ENCODE measurements at regions of chr7 and their contacts with region 1.

Region 1: DNA sequence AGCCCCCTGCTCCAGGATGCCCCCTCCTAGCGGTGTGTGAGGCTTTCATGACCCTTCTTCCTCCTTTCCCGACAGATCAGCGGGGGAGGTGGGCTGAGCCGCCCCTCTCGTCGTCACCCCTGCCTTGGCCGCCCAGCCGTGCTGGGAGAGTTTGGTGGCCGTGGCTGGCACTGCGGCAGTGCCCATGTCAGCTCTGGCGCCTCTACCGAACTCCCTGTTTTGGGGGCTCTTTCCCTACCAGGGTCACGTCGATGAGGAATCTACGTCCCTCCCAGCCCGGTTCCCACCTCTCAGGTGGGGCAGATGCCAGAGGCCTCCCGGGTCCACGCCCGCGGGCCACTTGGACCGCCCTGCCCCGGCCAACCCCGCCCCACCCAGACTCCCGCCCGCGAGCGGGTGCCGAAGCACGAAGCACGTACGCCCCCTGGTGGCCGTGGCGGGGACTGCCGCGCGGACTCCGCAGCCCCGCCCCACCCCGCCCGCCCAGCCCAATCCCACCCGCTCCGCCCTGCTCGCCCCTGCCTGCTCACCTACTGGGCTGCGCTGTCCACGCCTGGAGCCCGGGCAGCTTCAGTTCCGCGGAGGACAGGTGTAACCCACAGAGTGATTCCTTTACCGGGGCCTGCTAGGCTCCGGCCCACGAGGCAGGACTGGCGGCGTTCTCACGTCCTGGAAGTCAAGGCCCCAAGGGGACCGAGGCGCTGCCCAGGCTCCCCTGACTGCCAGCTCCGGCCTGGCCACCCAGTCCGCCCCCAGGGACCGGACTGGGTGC is 127.1 kb downstream of the UBE2H start:
- DNase-seq: peak; percentile 95
- ATAC-seq: peak; percentile 75
- H3K4me3 Mint-ChIP-seq: peak overlapping the region; percentile 86
- H3K27ac Mint-ChIP-seq: peak overlapping the region; percentile 55
- H3K4me1 Mint-ChIP-seq: peaks cover 17% of the 10 kb centered on the region
- H3K27me3 Mint-ChIP-seq: no peaks in the 10 kb centered on the region

Region 2: DNA sequence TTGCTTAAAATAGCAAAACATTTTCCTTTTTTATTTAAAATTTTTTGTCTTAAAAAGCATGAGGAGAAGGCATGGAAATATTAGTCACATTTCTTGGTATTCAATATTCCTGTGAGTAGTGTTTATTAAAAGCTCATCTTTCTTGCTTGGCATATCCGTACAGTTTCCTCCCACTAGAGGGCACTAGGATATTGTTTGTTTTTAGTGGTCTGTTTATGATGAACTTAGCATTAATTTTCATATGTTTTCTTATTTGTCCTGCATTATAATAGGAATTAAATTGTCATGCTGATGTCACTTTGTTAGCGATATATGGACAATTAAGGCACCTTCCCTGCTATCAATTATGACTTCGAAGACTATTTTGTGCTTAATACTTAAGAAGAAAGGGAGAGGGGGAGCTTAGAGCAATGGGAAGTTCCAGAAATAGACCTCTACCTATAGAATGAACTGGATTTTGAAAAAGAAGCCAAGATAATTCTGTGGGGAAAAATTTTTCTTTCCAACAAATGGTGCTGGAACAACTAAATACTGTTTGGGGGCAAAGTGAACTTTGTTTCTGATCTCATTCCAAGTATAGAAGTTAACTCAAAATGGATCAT is 482.5 kb before region 1 on chr7:
- CTCF ChIA-PET with region 1: interaction called, 5 read pairs
- POLR2A ChIA-PET with region 1: no interaction called
- intact Hi-C with region 1: loop called in 1 of 2 experiments (anchors 1 kb)
- DNase-seq: peak; percentile 9
- ATAC-seq: peak; percentile 36
- H3K4me3 Mint-ChIP-seq: no peak overlapping the region
- H3K27ac Mint-ChIP-seq: no peak overlapping the region
- H3K4me1 Mint-ChIP-seq: peaks cover 29% of the 10 kb centered on the region
- H3K27me3 Mint-ChIP-seq: no peaks in the 10 kb centered on the region

Region 3: DNA sequence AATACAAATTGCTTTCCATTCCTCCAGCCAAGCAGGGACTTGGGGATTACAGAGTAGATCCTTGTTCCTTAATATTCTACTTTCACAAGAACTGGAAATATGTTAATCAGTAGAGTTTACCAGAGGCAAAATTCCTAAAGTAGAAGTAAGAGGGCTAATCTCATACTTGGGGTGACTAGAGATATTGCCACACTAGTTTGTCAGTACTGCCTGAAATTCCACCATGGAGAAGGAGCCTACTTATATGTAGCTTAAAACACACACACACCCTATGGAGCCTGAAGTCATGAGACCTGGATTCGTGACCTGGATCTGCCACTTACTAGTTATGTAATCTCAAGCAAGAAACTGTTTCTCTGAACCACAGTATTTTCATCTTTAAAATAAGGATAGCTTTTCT is 357.6 kb before region 1 on chr7:
- CTCF ChIA-PET with region 1: interaction called, 3 read pairs
- POLR2A ChIA-PET with region 1: no interaction called
- intact Hi-C with region 1: loop called in 1 of 2 experiments (anchors 1 kb)
- DNase-seq: no peak
- ATAC-seq: no peak
- H3K4me3 Mint-ChIP-seq: no peak overlapping the region
- H3K27ac Mint-ChIP-seq: no peak overlapping the region
- H3K4me1 Mint-ChIP-seq: peaks cover 16% of the 10 kb centered on the region
- H3K27me3 Mint-ChIP-seq: no peaks in the 10 kb centered on the region

Region 4: DNA sequence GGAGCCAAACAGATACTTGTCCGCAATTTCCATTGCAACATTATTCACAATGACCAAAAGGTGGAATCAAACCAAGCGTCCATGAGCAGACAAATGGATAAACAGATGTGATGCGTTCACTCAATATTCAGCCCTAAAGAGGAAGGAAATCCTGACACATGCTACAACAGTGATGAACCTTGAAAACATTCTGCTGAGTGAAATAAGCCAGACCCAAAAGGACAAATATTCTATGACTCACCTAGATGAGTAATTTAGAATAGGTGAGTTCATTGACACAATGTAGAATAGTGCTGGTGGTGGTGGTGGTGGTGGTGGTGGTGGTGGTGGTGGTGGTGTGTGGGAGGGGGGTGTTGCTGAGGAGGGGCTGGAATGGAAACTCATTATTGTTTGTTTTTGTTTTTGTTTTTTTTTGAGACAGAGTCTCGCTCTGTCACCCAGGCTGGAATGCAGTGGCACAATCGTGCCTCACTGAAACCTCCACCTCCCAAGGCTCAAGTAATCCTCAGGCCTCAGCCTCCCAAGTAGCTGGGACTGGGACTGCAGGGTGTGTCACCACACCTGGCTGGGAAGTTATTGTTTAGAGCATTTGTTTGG is 294.8 kb before region 1 on chr7:
- CTCF ChIA-PET with region 1: no interaction called
- POLR2A ChIA-PET with region 1: no interaction called
- intact Hi-C with region 1: loop called in 1 of 2 experiments (anchors 1 kb)
- DNase-seq: peak; percentile 70
- ATAC-seq: peak; percentile 96
- H3K4me3 Mint-ChIP-seq: no peak overlapping the region
- H3K27ac Mint-ChIP-seq: peak overlapping the region; percentile 13
- H3K4me1 Mint-ChIP-seq: peaks cover 11% of the 10 kb centered on the region
- H3K27me3 Mint-ChIP-seq: peaks cover 10% of the 10 kb centered on the region

Region 5: GRCh38 chr7:129664029-129665012 is 161.4 kb before region 1 on chr7:
- CTCF ChIA-PET with region 1: interaction called, 12 read pairs
- POLR2A ChIA-PET with region 1: no interaction called
- intact Hi-C with region 1: loop called (anchors 1 to 2 kb)
- DNase-seq: no peak
- ATAC-seq: no peak
- H3K4me3 Mint-ChIP-seq: no peak overlapping the region
- H3K27ac Mint-ChIP-seq: peak overlapping the region; percentile 25
- H3K4me1 Mint-ChIP-seq: peaks cover 10% of the 10 kb centered on the region
- H3K27me3 Mint-ChIP-seq: no peaks in the 10 kb centered on the region

Region 6: GRCh38 chr7:129755555-129755954 is 70.1 kb before region 1 on chr7:
- CTCF ChIA-PET with region 1: no interaction called
- POLR2A ChIA-PET with region 1: no interaction called
- intact Hi-C with region 1: no loop called
- DNase-seq: no peak
- ATAC-seq: no peak
- H3K4me3 Mint-ChIP-seq: no peak overlapping the region
- H3K27ac Mint-ChIP-seq: no peak overlapping the region
- H3K4me1 Mint-ChIP-seq: no peaks in the 10 kb centered on the region
- H3K27me3 Mint-ChIP-seq: no peaks in the 10 kb centered on the region

Region 7: GRCh38 chr7:129804890-129805719 is 20.6 kb before region 1 on chr7:
- CTCF ChIA-PET with region 1: interaction called, 15 read pairs
- POLR2A ChIA-PET with region 1: no interaction called
- intact Hi-C with region 1: no loop called
- DNase-seq: no peak
- ATAC-seq: no peak
- H3K4me3 Mint-ChIP-seq: no peak overlapping the region
- H3K27ac Mint-ChIP-seq: no peak overlapping the region
- H3K4me1 Mint-ChIP-seq: no peaks in the 10 kb centered on the region
- H3K27me3 Mint-ChIP-seq: no peaks in the 10 kb centered on the region

Region 8: DNA sequence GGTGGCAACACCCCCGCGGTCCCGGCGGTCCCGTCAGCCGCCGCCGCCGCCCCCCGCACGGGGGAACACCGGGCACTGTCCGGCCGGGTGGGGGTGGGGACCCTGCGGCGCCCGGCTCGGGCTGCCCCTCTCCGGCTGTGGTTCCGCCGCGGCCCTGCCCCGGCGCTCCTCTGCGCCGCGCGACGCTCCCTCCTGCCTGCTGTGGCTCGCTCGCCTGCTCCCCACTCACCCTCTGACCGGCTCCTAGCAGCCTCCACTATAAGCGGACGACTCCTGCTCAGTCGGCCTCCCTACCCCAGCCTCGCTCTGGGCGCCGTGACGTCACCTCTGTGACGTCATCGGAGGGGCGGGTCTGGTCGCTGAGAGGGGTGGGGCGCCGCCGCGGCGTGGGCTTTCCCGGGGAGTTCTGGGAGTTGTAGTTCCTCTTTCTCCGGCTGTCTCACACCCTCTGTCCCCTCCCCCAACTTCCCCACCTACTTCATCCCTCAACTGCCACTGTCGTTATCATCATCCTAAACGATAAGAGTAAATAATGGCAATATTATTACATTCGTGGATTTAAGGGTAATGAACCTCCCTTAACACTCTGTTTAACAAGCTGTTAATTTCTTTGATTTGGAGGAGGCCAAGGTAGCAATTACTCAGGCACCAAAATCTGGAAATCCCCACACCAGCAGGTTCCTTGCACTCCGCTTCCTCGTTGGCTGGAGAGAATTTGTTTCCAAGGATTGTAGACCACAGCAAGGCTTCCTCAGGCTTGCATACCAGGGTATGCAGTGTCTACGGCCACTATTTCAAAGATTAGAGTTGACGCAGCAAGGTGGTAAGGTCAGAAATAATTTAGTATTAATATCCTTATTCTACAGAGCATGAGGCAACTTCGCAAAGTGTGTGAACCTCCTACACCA is 127.2 kb after region 1 on chr7 and contains the start of gene UBE2H:
- CTCF ChIA-PET with region 1: interaction called, 13 read pairs
- POLR2A ChIA-PET with region 1: interaction called, 3 read pairs
- intact Hi-C with region 1: loop called in 1 of 2 experiments (anchors 1 kb)
- DNase-seq: peak; percentile 96
- ATAC-seq: peak; percentile 66
- H3K4me3 Mint-ChIP-seq: no peak within 1 kb of the TSS
- H3K27ac Mint-ChIP-seq: peak within 1 kb of the TSS; percentile 99
- H3K4me1 Mint-ChIP-seq: peaks cover 8% of the 10 kb centered on the region
- H3K27me3 Mint-ChIP-seq: no peaks in the 10 kb centered on the region
- total RNA-seq, gene UBE2H: 25.6 to 40.7 TPM

Region 9: DNA sequence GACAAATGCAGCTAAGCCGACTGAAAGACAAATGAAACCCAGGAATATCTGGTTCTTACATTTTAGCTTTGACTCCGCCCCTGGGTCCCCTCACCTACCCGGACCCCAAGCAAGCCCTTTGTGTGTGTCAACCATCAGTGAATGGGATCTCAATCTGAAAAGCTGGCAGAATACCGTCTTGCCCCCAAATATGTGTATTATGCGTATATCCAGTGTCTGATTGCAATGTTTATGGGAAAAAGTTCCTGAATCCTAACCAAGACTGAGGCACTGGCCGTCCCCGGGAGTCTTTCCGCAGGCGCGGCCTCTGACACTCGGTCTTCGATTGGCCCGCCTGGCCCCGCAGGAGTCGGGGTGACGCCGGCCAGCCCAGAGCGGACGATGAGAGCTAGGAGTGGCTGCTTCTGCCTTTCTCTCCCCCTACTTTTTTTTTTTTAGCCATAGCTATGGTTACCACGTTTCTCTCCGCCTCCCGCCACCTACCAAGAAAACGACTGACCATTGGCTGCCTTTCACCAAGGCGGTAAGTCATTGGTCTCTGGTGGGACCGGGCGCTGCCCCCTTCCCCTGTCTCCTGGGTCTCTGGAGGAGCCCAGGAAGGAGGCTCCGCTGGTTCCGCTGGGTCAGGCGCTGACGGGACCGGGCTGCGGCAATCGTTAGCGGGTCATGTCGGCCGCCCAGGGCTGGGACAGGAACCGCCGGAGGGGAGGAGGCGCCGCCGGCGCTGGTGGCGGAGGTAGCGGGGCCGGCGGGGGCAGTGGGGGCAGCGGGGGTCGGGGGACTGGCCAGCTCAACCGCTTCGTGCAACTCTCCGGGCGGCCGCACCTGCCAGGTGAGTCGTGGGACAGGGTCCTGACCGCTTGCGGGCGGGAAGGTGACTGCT is 244.5 kb after region 1 on chr7 and contains the start of gene KLHDC10:
- CTCF ChIA-PET with region 1: no interaction called
- POLR2A ChIA-PET with region 1: no interaction called
- intact Hi-C with region 1: no loop called
- DNase-seq: peak; percentile 97
- ATAC-seq: peak; percentile 98
- H3K4me3 Mint-ChIP-seq: peak within 1 kb of the TSS; percentile 91
- H3K27ac Mint-ChIP-seq: peak within 1 kb of the TSS; percentile 90
- H3K4me1 Mint-ChIP-seq: peaks cover 32% of the 10 kb centered on the region
- H3K27me3 Mint-ChIP-seq: no peaks in the 10 kb centered on the region
- total RNA-seq, gene KLHDC10: 13.5 to 14.2 TPM

Measured in activated CD4-positive, alpha-beta T cell treated with anti-CD3 and anti-CD28 coated beads for 36 hours (primary cell).